PC-3 (cell line): ENCODE measurements at regions of chr1 and their contacts with region 1.

Region 1: DNA sequence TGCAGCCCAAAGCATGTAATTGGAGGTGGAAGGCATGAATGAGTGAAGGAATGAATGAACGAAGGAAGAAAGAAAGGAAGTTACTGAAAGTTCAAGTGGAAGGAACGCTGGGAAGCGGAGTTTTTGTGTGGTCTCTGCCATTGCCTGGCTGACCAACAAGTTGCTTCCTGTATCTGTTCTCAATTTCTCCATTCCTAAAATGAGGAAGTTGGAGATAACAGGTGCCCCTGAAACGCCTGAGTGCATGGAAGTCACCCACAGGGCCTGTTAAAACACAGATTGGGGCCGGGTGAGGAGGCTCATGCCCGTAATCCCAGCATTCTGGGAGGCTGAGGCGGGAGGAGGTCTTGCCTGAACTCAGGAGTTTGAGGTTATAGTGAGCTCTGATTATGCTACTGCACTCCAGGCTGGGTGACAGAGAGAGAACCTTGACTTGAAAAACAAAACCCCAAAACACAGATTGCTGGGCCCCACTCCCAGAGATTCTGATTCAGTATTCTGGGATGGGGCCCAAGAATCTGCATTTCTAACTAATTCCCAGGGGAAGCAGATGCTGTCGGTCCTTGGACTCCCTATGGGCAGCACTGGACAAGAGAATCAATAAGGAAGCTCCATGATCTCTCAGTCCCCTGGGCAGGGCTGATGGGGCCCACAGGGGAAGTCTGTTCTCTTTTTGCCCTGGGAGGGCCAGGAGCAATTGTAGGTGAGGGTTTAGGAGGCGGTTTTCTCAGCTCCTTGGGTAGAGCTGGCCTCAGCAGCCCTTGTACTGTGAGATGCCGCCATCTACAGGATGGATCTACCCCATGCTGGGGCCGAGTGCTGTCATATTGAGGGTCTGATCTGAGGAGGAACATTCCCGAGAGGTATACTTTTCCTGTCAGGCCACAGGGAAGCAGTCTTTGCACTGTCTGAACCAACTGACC is 3.3 kb upstream of the CNR2 start:
- DNase-seq: peak; percentile 84
- ATAC-seq: peak; percentile 95
- H3K4me3 ChIP-seq: no peak overlapping the region
- H3K27ac ChIP-seq: no peak overlapping the region
- H3K4me1 ChIP-seq: peaks cover 18% of the 10 kb centered on the region
- H3K27me3 ChIP-seq: no peaks in the 10 kb centered on the region
- CTCF ChIP-seq: peak; percentile 84

Region 2: DNA sequence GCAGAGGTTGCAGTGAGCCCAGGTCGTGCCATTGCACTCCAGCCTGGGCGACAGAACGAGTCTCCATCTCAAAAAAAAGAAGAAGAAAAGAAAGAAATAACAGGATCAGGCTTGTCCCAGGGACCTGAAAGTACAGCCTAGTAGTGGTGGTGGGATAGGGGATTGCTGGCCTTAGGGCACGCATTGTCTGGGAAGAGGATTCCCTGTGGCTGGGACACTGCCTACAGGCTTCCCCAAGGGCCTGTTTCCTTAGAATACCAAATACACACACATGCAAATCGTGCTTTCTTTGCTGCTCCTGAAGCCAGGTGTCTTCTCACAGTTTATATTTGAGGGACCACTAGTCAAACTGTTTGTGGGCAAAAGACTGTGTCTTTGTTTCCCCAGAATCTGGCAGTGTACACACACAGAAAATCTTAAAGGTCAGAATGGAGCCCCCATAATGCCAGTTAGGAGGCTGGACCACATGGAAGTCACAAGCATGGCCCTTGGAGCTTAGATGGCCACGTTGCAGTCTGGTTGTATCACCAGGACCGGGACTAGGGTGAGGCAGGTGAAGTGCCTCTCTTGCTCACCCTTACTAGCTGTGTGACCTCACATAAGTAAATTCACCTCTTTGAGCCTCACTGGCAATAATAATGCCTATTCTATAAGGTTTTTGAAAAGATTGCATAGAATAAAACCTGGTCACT is 419.8 kb before region 1 on chr1:
- CTCF ChIA-PET with region 1: no interaction called
- POLR2A ChIA-PET with region 1: no interaction called
- intact Hi-C with region 1: no loop called
- DNase-seq: no peak
- ATAC-seq: peak; percentile 35
- H3K4me3 ChIP-seq: no peak overlapping the region
- H3K27ac ChIP-seq: no peak overlapping the region
- H3K4me1 ChIP-seq: no peaks in the 10 kb centered on the region
- H3K27me3 ChIP-seq: no peaks in the 10 kb centered on the region
- CTCF ChIP-seq: no peak

Region 3: DNA sequence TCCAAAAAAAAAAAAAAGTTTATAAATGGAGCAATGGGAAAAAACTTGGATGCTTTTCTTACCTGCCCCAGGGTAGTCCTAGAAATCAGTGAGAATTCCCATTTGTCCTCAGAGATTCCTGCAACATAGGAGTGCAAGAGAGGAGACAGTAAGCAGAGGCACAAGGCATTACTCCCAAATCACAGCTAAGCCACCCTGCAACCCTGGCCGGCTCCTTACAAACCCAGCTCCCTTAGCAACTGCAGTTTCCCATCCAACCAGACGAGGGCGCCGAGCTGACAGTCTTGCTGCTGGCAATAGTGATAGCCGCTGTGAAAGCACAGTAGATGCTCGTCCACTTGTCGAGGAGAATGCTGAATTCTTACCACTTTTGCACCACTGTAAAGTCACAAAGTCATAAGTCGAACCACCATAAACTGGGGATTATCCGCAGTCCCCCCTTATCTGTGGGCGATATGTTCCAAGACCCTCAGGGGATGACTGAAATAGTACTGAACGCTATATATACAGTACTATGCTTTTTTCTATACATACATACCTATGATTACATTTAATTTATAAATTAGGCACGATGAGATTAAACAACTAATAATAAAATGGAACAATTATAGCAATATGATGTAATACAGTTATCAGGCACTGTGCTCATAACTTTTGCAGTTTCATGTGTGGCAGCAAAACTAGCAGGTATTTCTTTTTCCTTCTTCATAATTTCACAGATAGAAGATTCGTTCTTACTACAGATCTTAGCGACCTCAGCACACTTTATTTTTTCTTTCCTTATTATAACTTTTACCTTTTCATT is 144.2 kb before region 1 on chr1:
- CTCF ChIA-PET with region 1: interaction called, 9 read pairs
- POLR2A ChIA-PET with region 1: no interaction called
- intact Hi-C with region 1: loop called (anchors 1 kb)
- DNase-seq: peak; percentile 88
- ATAC-seq: peak; percentile 99
- H3K4me3 ChIP-seq: peak overlapping the region; percentile 46; the same call in 1 of the 2 replicates
- H3K27ac ChIP-seq: no peak overlapping the region
- H3K4me1 ChIP-seq: peaks cover 10% of the 10 kb centered on the region
- H3K27me3 ChIP-seq: no peaks in the 10 kb centered on the region
- CTCF ChIP-seq: peak; percentile 90

Region 4: GRCh38 chr1:23800400-23801337 is 115.8 kb before region 1 on chr1 and contains the start of gene GALE:
- CTCF ChIA-PET with region 1: no interaction called
- POLR2A ChIA-PET with region 1: no interaction called
- intact Hi-C with region 1: loop called (anchors 5 kb)
- DNase-seq: peak; percentile 93
- ATAC-seq: peak; percentile 57
- H3K4me3 ChIP-seq: peak within 1 kb of the TSS; percentile 93
- H3K27ac ChIP-seq: peak within 1 kb of the TSS; percentile 96
- H3K4me1 ChIP-seq: peaks cover 21% of the 10 kb centered on the region
- H3K27me3 ChIP-seq: no peaks in the 10 kb centered on the region
- CTCF ChIP-seq: no peak
- total RNA-seq, gene GALE: 86.0 and 86.4 TPM in 2 replicates

Region 5: DNA sequence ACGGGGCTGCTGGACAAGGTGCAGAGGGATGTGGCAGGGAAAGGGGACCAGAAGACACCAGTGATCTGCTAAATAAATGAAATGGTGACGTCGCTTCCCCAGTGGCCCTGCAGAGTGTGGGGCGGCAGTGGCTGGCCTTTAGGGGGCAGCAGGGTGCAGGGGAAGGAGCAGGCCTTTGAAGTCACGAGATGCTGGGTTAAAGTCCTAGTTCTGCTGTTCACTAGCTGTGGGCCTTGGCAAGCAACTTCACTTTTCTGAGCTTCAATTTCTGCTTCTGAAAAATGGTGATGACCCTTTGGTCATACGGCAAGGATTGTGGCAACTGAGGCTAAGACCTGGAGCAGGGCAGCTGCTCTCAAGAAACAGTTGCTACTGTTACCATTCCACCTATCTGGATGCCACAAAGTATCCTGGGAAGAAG is 106.7 kb before region 1 on chr1:
- CTCF ChIA-PET with region 1: interaction called, 17 read pairs
- POLR2A ChIA-PET with region 1: no interaction called
- intact Hi-C with region 1: loop called (anchors 5 kb)
- DNase-seq: peak; percentile 78
- ATAC-seq: peak; percentile 92
- H3K4me3 ChIP-seq: no peak overlapping the region
- H3K27ac ChIP-seq: no peak overlapping the region
- H3K4me1 ChIP-seq: 0 out of 2 replicates have a peak, but pooled peaks cover 5% of the 10 kb centered on the region
- H3K27me3 ChIP-seq: no peaks in the 10 kb centered on the region
- CTCF ChIP-seq: peak; percentile 81

Region 6: DNA sequence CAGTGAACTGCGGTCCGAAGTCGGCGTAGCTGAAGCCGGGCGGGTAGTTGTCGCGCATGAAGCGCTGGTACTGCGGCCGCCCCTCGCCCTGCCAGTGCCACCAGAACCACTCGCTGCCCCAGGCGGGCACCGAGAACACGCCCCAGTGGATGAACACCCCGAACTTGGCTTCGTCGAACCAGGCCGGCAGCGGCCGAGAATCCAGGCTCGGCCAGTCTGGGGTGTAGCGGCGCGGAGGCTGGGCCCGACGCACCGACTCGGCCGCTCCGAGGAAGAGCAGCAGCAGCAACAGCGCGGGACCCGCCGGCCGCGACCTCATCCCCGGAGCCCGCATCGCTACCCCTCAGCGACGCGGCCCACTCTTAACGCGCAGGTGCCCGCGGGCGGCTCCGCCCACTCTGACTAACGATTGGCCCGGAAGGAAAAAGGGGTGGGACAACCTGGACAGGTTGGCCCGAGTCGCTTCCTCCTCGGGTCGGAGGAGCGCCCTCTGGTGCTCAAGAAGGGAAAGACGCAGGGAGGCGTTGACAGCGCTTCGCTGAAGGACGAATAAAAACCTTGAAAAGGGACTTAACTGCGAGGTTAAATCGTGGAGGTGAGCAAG is 48.4 kb before region 1 on chr1 and contains the start of gene FUCA1:
- CTCF ChIA-PET with region 1: interaction called, 8 read pairs
- POLR2A ChIA-PET with region 1: no interaction called
- intact Hi-C with region 1: loop called (anchors 1 kb)
- DNase-seq: peak; percentile 98
- ATAC-seq: peak; percentile 90
- H3K4me3 ChIP-seq: peak within 1 kb of the TSS; percentile 82
- H3K27ac ChIP-seq: no peak within 1 kb of the TSS
- H3K4me1 ChIP-seq: peaks cover 35% of the 10 kb centered on the region
- H3K27me3 ChIP-seq: no peaks in the 10 kb centered on the region
- CTCF ChIP-seq: peak; percentile 84
- total RNA-seq, gene FUCA1: 20.3 and 23.4 TPM in 2 replicates

Region 7: DNA sequence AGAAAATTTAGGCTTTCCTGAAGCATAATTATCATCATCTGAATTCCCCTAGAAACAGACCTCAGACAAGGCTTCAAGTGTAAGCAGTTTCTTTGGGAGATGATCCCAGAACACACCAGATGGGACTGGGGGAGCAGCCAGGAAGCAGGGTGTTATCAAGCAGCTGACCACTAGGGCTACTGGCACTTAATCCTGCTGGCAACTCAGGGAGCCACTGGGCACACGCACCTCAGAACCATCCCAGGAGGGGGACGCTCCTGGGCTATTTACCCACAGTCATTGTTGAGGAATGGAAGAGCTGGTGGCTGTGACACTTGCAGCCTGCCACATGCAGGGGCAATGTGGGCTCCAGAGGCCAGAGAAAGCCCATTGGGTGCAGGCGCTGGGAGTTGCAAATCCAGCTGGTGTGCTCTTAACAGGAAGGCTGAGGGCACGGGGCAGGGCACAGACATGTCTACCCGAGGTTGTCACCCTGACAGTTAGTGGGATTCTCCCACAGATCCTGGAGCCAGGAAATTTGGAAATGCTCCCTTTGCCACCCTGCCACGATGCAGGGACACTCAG is 241.5 kb after region 1 on chr1:
- CTCF ChIA-PET with region 1: no interaction called
- POLR2A ChIA-PET with region 1: no interaction called
- intact Hi-C with region 1: no loop called
- DNase-seq: peak; percentile 13
- ATAC-seq: 0 out of 2 replicates have a peak, but pooled peaks have one; percentile 38
- H3K4me3 ChIP-seq: no peak overlapping the region
- H3K27ac ChIP-seq: no peak overlapping the region
- H3K4me1 ChIP-seq: no peaks in the 10 kb centered on the region
- H3K27me3 ChIP-seq: no peaks in the 10 kb centered on the region
- CTCF ChIP-seq: peak; percentile 27; the same call in 1 of the 2 replicates